ENCODE measurements at regions of chr2 and their contacts with region 1.

Region 1: GRCh38 chr2:70340921-70341765 is 39.3 kb upstream of the FAM136A start:
- DNase-seq: peak; percentile 57
- H3K4me3 ChIP-seq: no peak overlapping the region
- H3K27ac ChIP-seq: peak overlapping the region; percentile 2
- H3K4me1 ChIP-seq: peaks cover 33% of the 10 kb centered on the region
- H3K27me3 ChIP-seq: no peaks in the 10 kb centered on the region
- CTCF ChIP-seq: peak; percentile 87 to 89

Region 2: GRCh38 chr2:70381831-70382267 is 40.7 kb after region 1 on chr2:
- CTCF ChIA-PET with region 1: no interaction called
- dilution Hi-C with region 1: no loop called
- in situ Hi-C with region 1: no loop called
- intact Hi-C with region 1: loop called (anchors 1 kb)
- DNase-seq: peak; percentile 98
- H3K4me3 ChIP-seq: no peak overlapping the region
- H3K27ac ChIP-seq: peak overlapping the region; percentile 96
- H3K4me1 ChIP-seq: peaks cover 36% of the 10 kb centered on the region
- H3K27me3 ChIP-seq: no peaks in the 10 kb centered on the region
- CTCF ChIP-seq: no peak

Region 3: GRCh38 chr2:70440621-70441020 is 99.5 kb after region 1 on chr2:
- CTCF ChIA-PET with region 1: no interaction called
- dilution Hi-C with region 1: no loop called
- in situ Hi-C with region 1: loop called (anchors 10 kb)
- intact Hi-C with region 1: loop called (anchors 2 kb)
- DNase-seq: no peak
- H3K4me3 ChIP-seq: no peak overlapping the region
- H3K27ac ChIP-seq: no peak overlapping the region
- H3K4me1 ChIP-seq: no peaks in the 10 kb centered on the region
- H3K27me3 ChIP-seq: no peaks in the 10 kb centered on the region
- CTCF ChIP-seq: no peak

Region 4: DNA sequence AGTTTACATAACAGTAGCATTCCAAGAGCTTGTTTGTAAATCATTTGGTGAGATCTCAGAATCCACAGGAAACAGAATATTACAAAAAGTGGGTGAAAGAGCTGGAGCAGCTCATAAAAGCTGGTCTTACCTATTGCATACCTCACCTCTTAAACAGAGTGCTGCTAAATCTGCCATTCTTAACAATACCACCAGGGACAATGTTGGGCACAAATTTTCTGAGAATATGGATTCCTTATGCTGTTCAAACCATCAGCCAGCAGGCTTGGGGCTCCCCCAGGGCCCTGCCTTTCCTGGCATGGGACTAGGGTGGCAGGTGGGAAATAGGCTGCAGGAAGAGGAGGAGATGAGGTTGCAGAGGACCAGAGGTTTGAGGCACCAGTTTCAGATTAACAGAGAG is 156.9 kb after region 1 on chr2:
- CTCF ChIA-PET with region 1: no interaction called
- dilution Hi-C with region 1: no loop called
- in situ Hi-C with region 1: no loop called
- intact Hi-C with region 1: loop called (anchors 5 kb)
- DNase-seq: no peak
- H3K4me3 ChIP-seq: no peak overlapping the region
- H3K27ac ChIP-seq: no peak overlapping the region
- H3K4me1 ChIP-seq: peaks cover 14% of the 10 kb centered on the region
- H3K27me3 ChIP-seq: no peaks in the 10 kb centered on the region
- CTCF ChIP-seq: peak; percentile 32 to 48

Region 5: GRCh38 chr2:70647873-70648481 is 306.8 kb after region 1 on chr2:
- CTCF ChIA-PET with region 1: interaction called, 3 read pairs
- dilution Hi-C with region 1: no loop called
- in situ Hi-C with region 1: no loop called
- intact Hi-C with region 1: loop called (anchors 1 kb)
- DNase-seq: peak; percentile 51
- H3K4me3 ChIP-seq: no peak overlapping the region
- H3K27ac ChIP-seq: no peak overlapping the region
- H3K4me1 ChIP-seq: no peaks in the 10 kb centered on the region
- H3K27me3 ChIP-seq: no peaks in the 10 kb centered on the region
- CTCF ChIP-seq: peak; percentile 100